Activated CD4-positive, alpha-beta memory T cell treated with anti-CD3 and anti-CD28 coated beads for 36 hours (primary cell): ENCODE measurements at regions of chr4 and their contacts with region 1.

Region 1: DNA sequence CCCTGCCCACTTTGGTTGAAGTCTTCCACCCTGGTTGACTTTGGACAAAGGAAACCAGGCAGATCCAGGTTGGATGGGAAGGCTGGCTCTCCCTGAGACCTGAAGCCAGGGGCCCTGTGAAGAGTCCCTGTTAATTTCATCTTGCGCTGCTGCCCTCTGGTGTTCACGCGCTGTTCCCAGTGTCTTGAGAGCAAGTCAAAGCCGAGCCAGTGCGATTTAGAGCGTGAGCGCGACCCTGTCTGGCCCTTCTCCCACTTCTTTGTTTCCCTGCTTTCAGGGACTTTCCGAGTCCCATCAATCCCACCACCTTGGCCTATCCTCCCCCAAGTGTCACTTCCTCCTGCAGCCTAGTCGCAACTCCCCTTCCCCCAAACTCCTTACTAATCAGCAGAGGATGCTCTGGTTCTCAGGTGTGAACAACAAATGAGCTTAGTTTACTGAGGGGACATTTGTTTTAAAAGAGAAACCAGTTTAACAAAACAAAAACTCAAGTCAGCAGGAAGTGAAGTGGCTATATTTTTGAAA is 25.8 kb upstream of the CHRNA9 start:
- DNase-seq: peak; percentile 94
- H3K4me3 Mint-ChIP-seq: peak overlapping the region; percentile 54
- H3K27ac Mint-ChIP-seq: peak overlapping the region; percentile 80
- H3K4me1 Mint-ChIP-seq: peaks cover 72% of the 10 kb centered on the region
- H3K27me3 Mint-ChIP-seq: no peaks in the 10 kb centered on the region

Region 2: DNA sequence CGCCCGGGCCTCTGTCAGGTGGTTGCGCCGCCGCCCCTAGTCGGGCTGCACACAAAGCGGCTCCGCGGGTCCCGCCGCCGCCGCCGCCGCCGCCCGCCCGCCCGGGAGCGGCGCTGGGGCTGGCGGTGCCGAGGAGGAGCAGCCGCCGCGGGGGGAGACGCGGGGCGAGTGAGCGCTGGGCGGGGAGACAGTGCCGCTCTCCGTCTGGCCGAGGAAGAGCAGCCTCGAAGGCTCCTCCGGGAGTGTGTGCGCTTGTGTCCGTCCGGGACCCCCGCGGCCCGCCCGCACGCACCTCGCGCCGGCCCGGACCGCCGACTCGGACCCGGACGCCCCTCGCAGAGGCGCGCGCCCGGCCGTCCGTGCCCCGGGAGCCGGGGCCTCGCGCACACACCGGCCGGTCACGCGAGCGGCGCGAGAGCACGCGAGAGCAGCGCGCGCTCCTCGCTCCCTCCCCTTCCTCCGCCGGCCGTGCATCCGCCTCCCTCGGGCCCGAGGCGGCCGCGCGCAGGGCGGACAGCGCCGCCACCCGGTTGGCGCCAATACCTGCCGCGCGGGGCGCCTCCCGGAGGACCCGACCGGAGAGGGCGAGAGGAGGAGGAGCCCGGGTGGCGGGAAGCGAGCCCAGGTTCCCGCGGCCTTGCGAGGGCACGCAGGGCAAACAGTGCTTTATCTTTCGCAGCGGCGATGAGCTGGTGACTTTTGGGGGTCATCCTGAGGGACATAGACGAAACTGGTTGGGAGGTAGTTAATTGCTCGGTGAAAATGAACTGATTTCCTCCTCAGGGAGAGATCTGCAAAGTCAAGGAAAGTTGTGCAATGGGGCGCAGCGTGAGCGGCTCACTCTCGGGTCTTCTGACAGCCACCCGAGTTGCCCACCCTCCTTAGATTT is 331.6 kb before region 1 on chr4 and contains the start of gene PDS5A:
- CTCF ChIA-PET with region 1: no interaction called
- POLR2A ChIA-PET with region 1: no interaction called
- intact Hi-C with region 1: loop called (anchors 5 kb)
- DNase-seq: peak; percentile 93
- H3K4me3 Mint-ChIP-seq: peak within 1 kb of the TSS; percentile 94
- H3K27ac Mint-ChIP-seq: peak within 1 kb of the TSS; percentile 99
- H3K4me1 Mint-ChIP-seq: peaks cover 38% of the 10 kb centered on the region
- H3K27me3 Mint-ChIP-seq: no peaks in the 10 kb centered on the region
- total RNA-seq, gene PDS5A: 101 to 103 TPM

Region 3: DNA sequence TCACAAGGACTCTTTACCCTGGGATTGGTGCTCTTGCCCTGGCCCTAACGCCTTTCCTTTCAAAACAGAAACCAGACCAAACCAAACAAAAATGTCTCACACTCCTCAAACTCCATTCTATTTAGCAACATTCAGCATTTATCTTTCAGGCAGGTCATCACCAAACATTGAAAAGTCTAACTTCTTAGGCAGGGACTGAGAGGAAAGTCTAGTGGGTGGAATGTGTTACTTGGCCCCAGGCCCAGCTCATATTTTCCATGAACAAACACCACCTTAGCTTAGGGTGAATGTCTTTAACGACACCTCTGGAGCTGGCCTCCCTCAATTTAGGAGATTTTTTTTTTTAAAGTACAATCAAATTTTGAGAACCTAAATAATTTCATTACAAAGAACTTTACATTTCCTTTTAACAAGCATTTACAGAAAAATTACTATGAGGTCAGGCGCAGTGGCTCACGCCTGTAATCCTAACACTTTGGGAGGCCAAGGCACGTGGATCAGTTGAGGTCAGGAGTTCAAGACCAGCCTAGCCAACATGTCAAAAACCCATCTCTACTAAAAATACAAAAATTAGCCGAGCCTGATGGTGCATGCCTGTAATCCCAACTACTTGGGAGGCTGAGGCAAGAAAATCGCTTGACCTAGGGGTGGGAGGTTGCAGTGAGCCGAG is 262.9 kb before region 1 on chr4:
- CTCF ChIA-PET with region 1: no interaction called
- POLR2A ChIA-PET with region 1: no interaction called
- intact Hi-C with region 1: no loop called
- DNase-seq: peak; percentile 69
- H3K4me3 Mint-ChIP-seq: no peak overlapping the region
- H3K27ac Mint-ChIP-seq: peak overlapping the region; percentile 73
- H3K4me1 Mint-ChIP-seq: peaks cover 5% of the 10 kb centered on the region
- H3K27me3 Mint-ChIP-seq: no peaks in the 10 kb centered on the region

Region 4: GRCh38 chr4:40193016-40193571 is 116.2 kb before region 1 on chr4:
- CTCF ChIA-PET with region 1: interaction called, 18 read pairs
- POLR2A ChIA-PET with region 1: interaction called, 57 read pairs
- intact Hi-C with region 1: no loop called
- DNase-seq: no peak
- H3K4me3 Mint-ChIP-seq: peak overlapping the region; percentile 93
- H3K27ac Mint-ChIP-seq: peak overlapping the region; percentile 98
- H3K4me1 Mint-ChIP-seq: peaks cover 66% of the 10 kb centered on the region
- H3K27me3 Mint-ChIP-seq: no peaks in the 10 kb centered on the region

Region 5: GRCh38 chr4:40212674-40213527 is 96.4 kb before region 1 on chr4:
- CTCF ChIA-PET with region 1: interaction called, 16 read pairs
- POLR2A ChIA-PET with region 1: interaction called, 13 read pairs
- intact Hi-C with region 1: no loop called
- DNase-seq: no peak
- H3K4me3 Mint-ChIP-seq: peak overlapping the region; percentile 73
- H3K27ac Mint-ChIP-seq: peak overlapping the region; percentile 91
- H3K4me1 Mint-ChIP-seq: peaks cover 89% of the 10 kb centered on the region
- H3K27me3 Mint-ChIP-seq: no peaks in the 10 kb centered on the region

Region 6: GRCh38 chr4:40255393-40256281 is 53.7 kb before region 1 on chr4:
- CTCF ChIA-PET with region 1: interaction called, 11 read pairs
- POLR2A ChIA-PET with region 1: interaction called, 3 read pairs
- intact Hi-C with region 1: loop called (anchors 2 kb)
- DNase-seq: no peak
- H3K4me3 Mint-ChIP-seq: no peak overlapping the region
- H3K27ac Mint-ChIP-seq: peak overlapping the region; percentile 72
- H3K4me1 Mint-ChIP-seq: peaks cover 59% of the 10 kb centered on the region
- H3K27me3 Mint-ChIP-seq: no peaks in the 10 kb centered on the region

Region 7: GRCh38 chr4:40325189-40326019 is 16.1 kb after region 1 on chr4:
- CTCF ChIA-PET with region 1: interaction called, 12 read pairs
- POLR2A ChIA-PET with region 1: no interaction called
- intact Hi-C with region 1: no loop called
- DNase-seq: peak; percentile 75
- H3K4me3 Mint-ChIP-seq: no peak overlapping the region
- H3K27ac Mint-ChIP-seq: no peak overlapping the region
- H3K4me1 Mint-ChIP-seq: peaks cover 18% of the 10 kb centered on the region
- H3K27me3 Mint-ChIP-seq: no peaks in the 10 kb centered on the region

Region 8: DNA sequence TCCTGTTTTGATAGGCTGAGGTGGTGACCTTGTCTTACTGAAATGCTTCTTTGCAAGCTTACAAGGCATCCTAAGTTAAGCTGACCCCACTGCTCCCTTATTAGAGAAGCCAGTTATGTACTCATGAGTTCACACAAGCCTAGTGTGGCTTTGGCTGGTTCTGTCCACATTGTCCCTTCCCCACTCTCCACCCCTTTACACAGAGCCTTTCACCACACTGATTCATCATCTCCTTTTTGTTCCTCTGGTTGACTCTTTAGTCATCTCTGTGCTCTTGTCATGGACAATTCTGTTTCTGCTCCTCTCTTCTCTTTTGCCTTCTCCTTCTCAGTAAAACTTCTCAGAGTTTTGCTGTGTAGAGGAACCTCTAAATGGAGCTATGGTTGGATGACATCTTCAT is 30.7 kb after region 1 on chr4:
- CTCF ChIA-PET with region 1: no interaction called
- POLR2A ChIA-PET with region 1: no interaction called
- intact Hi-C with region 1: no loop called
- DNase-seq: peak; percentile 23
- H3K4me3 Mint-ChIP-seq: no peak overlapping the region
- H3K27ac Mint-ChIP-seq: no peak overlapping the region
- H3K4me1 Mint-ChIP-seq: peaks cover 9% of the 10 kb centered on the region
- H3K27me3 Mint-ChIP-seq: no peaks in the 10 kb centered on the region